Posterior vena cava (tissue), 2 donors: ENCODE measurements at regions of chr3 and their contacts with region 1.

Region 1: GRCh38 chr3:57078344-57078634 is 17.8 kb downstream of the SPATA12 start:
- DNase-seq: peak; percentile 91

Region 2: DNA sequence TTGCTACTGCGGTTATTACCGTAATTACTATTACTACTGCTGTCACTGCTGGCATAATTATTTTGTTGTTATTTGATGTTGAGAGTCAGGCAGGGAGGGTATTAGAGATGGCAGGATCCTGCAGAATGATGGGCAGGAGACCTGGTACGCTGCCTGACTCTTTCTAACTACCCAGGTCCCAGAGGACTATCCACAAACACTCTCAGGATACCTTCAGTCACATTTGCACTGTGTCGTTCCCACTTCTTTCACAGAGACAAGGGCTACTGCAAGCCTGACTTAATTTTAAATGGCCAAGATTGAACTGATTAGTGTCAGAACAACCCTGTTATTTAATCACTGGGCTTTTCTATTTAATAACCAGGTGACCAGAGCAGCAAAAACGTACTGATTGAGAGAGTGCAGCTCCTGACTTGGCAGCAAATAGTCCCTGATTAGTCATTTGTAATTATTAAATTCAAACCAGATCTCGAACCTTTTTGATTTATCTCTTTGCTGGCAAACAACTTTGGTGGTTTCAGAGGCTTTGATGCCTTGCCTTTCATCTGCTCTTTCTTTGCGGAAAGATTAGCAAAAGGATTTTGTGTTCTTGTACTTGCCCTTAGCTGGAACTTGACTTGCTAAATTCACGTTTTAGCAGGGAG is 187.7 kb before region 1 on chr3:
- intact Hi-C with region 1: no loop called
- DNase-seq: no peak

Region 3: GRCh38 chr3:57007513-57008460 is 70.5 kb before region 1 on chr3:
- intact Hi-C with region 1: loop called in 1 of 2 experiments (anchors 10 kb)
- DNase-seq: peak; percentile 94

Region 4: GRCh38 chr3:57038466-57039164 is 39.7 kb before region 1 on chr3:
- intact Hi-C with region 1: loop called in 1 of 2 experiments (anchors 1 kb)
- DNase-seq: no peak

Region 5: DNA sequence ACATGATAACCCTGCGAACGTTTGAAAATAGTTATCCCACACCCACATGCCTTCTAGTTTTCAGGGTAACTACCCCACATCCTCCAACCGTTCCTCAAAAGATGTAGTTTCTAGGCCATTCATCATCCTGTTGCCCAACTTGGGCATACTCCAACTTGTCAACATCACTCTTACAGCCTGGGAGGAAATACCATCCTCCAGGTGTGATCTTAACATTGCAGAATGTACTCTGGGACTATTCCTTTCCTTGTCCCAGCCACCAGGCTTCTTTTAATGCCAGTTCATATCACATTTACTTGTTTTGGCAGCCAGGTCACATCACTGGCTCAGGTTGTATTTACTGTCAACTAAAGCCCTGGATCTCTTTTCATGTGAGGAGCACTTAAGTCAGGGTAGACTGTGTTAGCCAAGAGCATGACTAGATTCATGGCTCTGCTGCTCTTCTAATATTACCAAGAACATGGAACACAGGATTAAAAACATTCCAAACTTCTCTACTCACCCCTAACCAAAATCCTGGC is 618.6 kb after region 1 on chr3:
- intact Hi-C with region 1: no loop called
- DNase-seq: no peak